Heart left ventricle (tissue), 16 donors: ENCODE measurements at regions of chr1 and their contacts with region 1.

Region 1: GRCh38 chr1:40951943-40952743 is 27.4 kb upstream of the CTPS1 start:
- DNase-seq: peak; percentile 59 to 83 (median 65)
- ATAC-seq: peak in 3 of 4 donors; percentile 81 to 87 (median 85)
- H3K4me3 ChIP-seq: no peak overlapping the region
- H3K27ac ChIP-seq: no peak overlapping the region
- H3K4me1 ChIP-seq: peaks cover 0 to 13% (median 1%) of the 10 kb centered on the region in 12 donors
- H3K27me3 ChIP-seq: peaks cover 0 to 12% (median 0%) of the 10 kb centered on the region in 9 donors
- CTCF ChIP-seq: peak; percentile 86 to 94 (median 92)
- POLR2A ChIP-seq: no peak

Region 2: GRCh38 chr1:40612345-40612831 is 339.8 kb before region 1 on chr1:
- intact Hi-C with region 1: loop called in 8 of 10 experiments (anchors 2 to 10 kb)
- DNase-seq: peak in 4 of 5 donors; percentile 50 to 68 (median 56)
- ATAC-seq: peak; percentile 47 to 92 (median 88)
- H3K4me3 ChIP-seq: no peak overlapping the region
- H3K27ac ChIP-seq: no peak overlapping the region
- H3K4me1 ChIP-seq: peaks cover 0 to 3% (median 0%) of the 10 kb centered on the region in 12 donors
- H3K27me3 ChIP-seq: no peaks in the 10 kb centered on the region
- CTCF ChIP-seq: peak; percentile 72 to 90 (median 80)
- POLR2A ChIP-seq: no peak

Region 3: GRCh38 chr1:40625066-40625465 is 327.1 kb before region 1 on chr1:
- intact Hi-C with region 1: loop called in 1 of 10 experiments (anchors 10 kb)
- DNase-seq: peak in 4 of 5 donors; percentile 23 to 52 (median 34)
- ATAC-seq: peak; percentile 72 to 92 (median 84)
- H3K4me3 ChIP-seq: no peak overlapping the region
- H3K27ac ChIP-seq: no peak overlapping the region
- H3K4me1 ChIP-seq: peaks cover 0 to 6% (median 0%) of the 10 kb centered on the region in 12 donors
- H3K27me3 ChIP-seq: no peaks in the 10 kb centered on the region
- CTCF ChIP-seq: peak in 10 of 12 donors; percentile 25 to 56 (median 33)
- POLR2A ChIP-seq: no peak

Region 4: DNA sequence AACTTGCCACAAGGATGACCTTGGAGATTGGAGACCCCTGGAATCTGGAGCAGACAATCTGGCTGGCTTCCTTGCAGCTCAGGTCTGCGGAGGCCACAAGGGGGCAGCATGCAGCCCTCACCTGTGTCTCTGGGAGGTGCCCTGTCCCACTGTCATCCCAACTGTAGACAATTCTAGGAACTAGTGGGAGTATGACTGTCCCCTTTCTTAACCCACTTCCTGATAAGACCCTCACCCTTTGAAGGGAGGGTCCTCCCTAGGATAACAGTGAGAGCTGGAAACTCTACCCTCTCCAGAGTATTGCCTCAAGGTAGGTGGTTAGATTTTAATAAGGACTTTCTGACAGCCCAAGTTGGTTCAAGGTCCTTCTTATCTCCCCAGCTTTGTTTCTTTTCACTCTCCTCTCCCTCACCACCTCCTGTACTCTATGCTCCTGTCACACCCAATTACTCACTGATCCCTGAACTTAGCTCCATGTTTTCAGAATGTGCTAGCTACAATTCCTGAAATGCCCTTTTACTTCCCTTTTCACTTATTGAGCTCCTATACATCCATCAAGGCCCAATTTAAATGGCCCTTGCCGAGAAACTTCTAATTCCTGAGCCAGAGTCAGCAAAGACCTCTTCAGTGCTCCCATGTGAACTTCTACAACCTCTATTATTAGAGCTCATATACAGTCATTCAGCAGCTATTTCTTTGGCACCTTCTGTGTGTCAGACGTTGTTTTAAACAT is 177.7 kb before region 1 on chr1:
- intact Hi-C with region 1: loop called in 6 of 10 experiments (anchors 5 to 10 kb)
- DNase-seq: peak in 2 of 5 donors; percentile 38 to 53
- ATAC-seq: peak in 3 of 4 donors; percentile 36 to 68 (median 56)
- H3K4me3 ChIP-seq: no peak overlapping the region
- H3K27ac ChIP-seq: peak overlapping the region in 1 of 12 donors; percentile 9
- H3K4me1 ChIP-seq: peaks cover 0 to 15% (median 5%) of the 10 kb centered on the region in 12 donors
- H3K27me3 ChIP-seq: no peaks in the 10 kb centered on the region
- CTCF ChIP-seq: peak; percentile 64 to 86 (median 76)
- POLR2A ChIP-seq: no peak

Region 5: DNA sequence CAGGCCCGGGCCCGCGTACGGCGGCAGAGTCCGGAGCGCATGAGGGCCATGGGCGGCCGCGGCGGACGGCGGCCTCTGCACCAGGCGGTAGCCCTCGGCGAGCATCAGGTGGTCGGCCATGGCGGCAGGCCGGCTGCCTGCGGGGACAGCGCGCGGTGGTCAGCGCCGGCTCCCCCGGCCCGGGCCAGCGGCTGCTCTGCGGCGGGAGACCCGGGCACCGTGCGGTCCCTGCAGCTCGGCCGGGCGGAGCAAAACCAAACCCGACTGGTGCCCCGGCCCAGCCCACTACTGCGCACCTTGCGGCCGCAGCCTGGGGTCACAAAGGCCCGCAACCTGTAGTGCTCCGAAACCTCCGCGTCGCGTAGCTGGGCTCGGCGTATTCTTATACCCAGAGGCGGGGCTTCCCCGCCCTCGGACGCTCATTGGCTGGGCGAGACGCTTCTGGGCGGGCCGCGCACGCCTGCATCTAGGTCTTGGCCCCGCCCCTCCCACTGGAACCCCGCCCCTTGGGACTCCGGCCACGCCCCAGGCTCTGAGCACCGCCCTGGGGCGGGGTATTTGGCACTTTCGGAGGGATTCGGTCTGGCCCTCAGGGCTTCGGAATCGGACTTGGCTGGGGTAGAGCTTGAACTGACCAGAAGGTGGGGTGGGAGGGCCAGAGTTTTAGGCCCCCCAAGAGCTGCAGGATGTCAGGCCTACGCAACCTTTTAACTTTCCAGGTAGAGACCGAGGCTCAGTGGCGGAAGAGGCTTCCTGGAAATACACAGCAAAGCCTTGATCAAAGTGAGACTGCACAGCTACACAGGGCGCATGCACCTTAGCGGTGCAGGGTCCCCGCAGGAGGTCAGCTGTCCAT is 89.9 kb before region 1 on chr1 and contains the start of gene CITED4:
- intact Hi-C with region 1: loop called in 1 of 10 experiments (anchors 5 kb)
- DNase-seq: peak; percentile 95 to 98 (median 96)
- ATAC-seq: peak; percentile 94 to 97 (median 95)
- H3K4me3 ChIP-seq: peak within 1 kb of the TSS; percentile 42 to 98 (median 76)
- H3K27ac ChIP-seq: peak within 1 kb of the TSS; percentile 57 to 97 (median 88)
- H3K4me1 ChIP-seq: peaks cover 0 to 43% (median 17%) of the 10 kb centered on the region in 12 donors
- H3K27me3 ChIP-seq: no peaks in the 10 kb centered on the region
- CTCF ChIP-seq: peak; percentile 14 to 57 (median 30)
- POLR2A ChIP-seq: peak; percentile 78 to 98
- total RNA-seq, gene CITED4: 23.7 to 49.5 (median 34.3) TPM